Caco-2 (cell line): ENCODE measurements at regions of chr4 and their contacts with region 1.

Region 1: GRCh38 chr4:46793036-46793435 is 116.0 kb downstream of the COX7B2 start:
- DNase-seq: peak; percentile 93 to 96
- H3K4me3 ChIP-seq: no peak overlapping the region
- H3K4me3 Mint-ChIP-seq: peak overlapping the region; percentile 36
- H3K27ac Mint-ChIP-seq: peak overlapping the region; percentile 74
- H3K4me1 ChIP-seq: peaks cover 26% of the 10 kb centered on the region
- H3K4me1 Mint-ChIP-seq: peaks cover 23% of the 10 kb centered on the region
- H3K27me3 ChIP-seq: no peaks in the 10 kb centered on the region
- H3K27me3 Mint-ChIP-seq: no peaks in the 10 kb centered on the region
- CTCF ChIP-seq: no peak

Region 2: DNA sequence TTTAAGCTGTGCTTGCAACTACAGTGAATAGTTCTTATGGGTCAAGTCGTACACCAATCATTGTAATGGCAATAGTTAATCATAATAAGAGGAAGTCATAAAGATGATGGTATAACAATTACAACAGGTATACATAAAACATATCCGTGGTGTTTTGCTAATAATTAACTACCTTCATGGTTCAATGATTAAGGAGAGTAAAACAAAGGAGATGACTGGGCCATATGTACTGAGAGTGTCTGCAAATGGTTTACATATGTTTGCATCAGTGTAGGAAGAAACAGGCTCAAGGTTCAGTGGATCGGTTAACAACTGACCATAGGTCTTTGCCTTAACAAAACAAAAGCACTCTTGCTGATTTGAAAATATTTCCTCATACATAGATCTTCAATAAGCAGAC is 137.0 kb before region 1 on chr4:
- CTCF ChIA-PET with region 1: no interaction called
- POLR2A ChIA-PET with region 1: no interaction called
- intact Hi-C with region 1: loop called (anchors 1 kb)
- DNase-seq: peak in 1 of 2 experiments; percentile 42
- H3K4me3 ChIP-seq: no peak overlapping the region
- H3K4me3 Mint-ChIP-seq: no peak overlapping the region
- H3K27ac Mint-ChIP-seq: peak overlapping the region; percentile 27
- H3K4me1 ChIP-seq: peaks cover 16% of the 10 kb centered on the region; the same call in 1 of the 2 replicates
- H3K4me1 Mint-ChIP-seq: peaks cover 7% of the 10 kb centered on the region
- H3K27me3 ChIP-seq: no peaks in the 10 kb centered on the region
- H3K27me3 Mint-ChIP-seq: no peaks in the 10 kb centered on the region
- CTCF ChIP-seq: no peak

Region 3: GRCh38 chr4:46870411-46870810 is 77.4 kb after region 1 on chr4:
- CTCF ChIA-PET with region 1: no interaction called
- POLR2A ChIA-PET with region 1: no interaction called
- intact Hi-C with region 1: loop called (anchors 1 kb)
- DNase-seq: no peak
- H3K4me3 ChIP-seq: no peak overlapping the region
- H3K4me3 Mint-ChIP-seq: no peak overlapping the region
- H3K27ac Mint-ChIP-seq: no peak overlapping the region
- H3K4me1 ChIP-seq: peaks cover 20% of the 10 kb centered on the region
- H3K4me1 Mint-ChIP-seq: peaks cover 25% of the 10 kb centered on the region
- H3K27me3 ChIP-seq: no peaks in the 10 kb centered on the region
- H3K27me3 Mint-ChIP-seq: no peaks in the 10 kb centered on the region
- CTCF ChIP-seq: no peak

Region 4: GRCh38 chr4:46931981-46932380 is 138.9 kb after region 1 on chr4:
- CTCF ChIA-PET with region 1: no interaction called
- POLR2A ChIA-PET with region 1: no interaction called
- intact Hi-C with region 1: loop called (anchors 1 kb)
- DNase-seq: peak in 1 of 2 experiments; percentile 30
- H3K4me3 ChIP-seq: no peak overlapping the region
- H3K4me3 Mint-ChIP-seq: no peak overlapping the region
- H3K27ac Mint-ChIP-seq: no peak overlapping the region
- H3K4me1 ChIP-seq: peaks cover 41% of the 10 kb centered on the region
- H3K4me1 Mint-ChIP-seq: peaks cover 15% of the 10 kb centered on the region
- H3K27me3 ChIP-seq: no peaks in the 10 kb centered on the region
- H3K27me3 Mint-ChIP-seq: no peaks in the 10 kb centered on the region
- CTCF ChIP-seq: peak; percentile 13 to 35